Left lung (tissue), 14 donors: ENCODE measurements at regions of chr6 and their contacts with region 1.

Region 1: DNA sequence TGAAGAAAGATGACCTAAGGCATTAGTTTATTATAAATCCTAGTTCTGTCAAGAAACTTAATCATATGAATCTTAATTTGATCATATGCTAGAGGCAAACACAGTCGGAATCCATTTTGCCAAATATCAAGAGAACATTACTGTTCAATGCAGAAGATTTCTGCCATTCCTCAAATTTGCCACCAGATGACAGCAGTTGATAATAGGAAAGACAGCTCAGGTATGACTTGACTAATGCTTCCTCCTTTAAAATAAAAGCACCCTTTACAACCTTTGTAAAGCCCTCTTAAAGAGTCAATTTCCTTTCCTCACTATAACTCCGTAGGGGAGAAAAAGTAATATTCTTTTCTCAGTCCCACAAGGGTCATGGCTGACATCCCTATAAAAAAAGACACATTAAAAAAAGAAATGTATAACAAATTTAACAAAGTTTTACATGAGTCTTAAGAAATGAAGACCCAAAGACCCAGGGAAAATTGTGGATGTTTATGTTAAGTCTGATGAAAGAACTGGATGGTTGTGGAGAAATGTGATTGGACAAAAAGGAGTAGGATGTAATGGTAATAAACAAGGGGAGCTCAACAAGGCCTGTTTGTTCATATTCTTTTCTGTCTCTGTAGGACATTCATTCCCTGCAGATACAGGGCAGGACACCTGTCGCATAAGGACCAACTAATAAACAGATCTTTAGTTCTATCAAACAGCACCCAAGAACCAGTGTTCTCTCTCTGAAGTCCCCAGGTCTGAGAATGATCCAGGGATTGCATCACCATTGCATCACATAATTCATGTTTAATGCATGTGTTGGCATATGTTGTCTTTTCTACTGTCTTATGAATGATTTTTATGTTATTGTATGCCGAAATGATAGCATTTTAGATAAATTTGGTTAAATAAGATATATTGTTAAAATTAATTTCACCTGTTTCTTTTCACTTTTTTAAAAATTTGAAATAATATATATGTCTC is 23.0 kb upstream of the IL17A start:
- DNase-seq: no peak
- ATAC-seq: peak; percentile 74
- H3K4me3 ChIP-seq: no peak overlapping the region
- H3K27ac ChIP-seq: no peak overlapping the region
- H3K4me1 ChIP-seq: no peaks in the 10 kb centered on the region
- H3K27me3 ChIP-seq: peaks cover 0 to 12% of the 10 kb centered on the region in 2 donors
- CTCF ChIP-seq: peak; percentile 21 to 28

Region 2: DNA sequence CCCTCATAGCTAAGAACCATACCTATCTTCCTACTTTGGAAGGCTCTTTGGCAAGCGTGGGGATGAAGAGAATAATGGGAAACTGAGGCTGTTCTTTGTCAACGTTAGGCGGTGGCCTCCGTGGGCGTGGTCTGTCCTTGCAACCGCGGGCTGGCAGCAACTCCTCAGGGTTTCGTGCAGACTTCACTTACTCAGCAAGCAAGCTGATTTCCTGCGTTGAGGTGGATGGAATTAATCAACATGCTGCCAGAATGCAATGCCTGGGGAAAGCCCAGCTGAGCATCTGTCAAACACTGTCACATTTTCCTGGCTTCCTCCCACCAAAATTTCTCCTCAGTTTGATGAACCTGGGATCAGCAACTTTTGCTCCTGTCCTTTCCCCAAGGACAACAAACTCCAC is 90.3 kb after region 1 on chr6:
- intact Hi-C with region 1: no loop called
- DNase-seq: peak in 1 of 4 donors; percentile 70
- ATAC-seq: peak; percentile 37
- H3K4me3 ChIP-seq: no peak overlapping the region
- H3K27ac ChIP-seq: no peak overlapping the region
- H3K4me1 ChIP-seq: no peaks in the 10 kb centered on the region
- H3K27me3 ChIP-seq: peaks cover 4 to 39% of the 10 kb centered on the region in 2 donors
- CTCF ChIP-seq: no peak

Region 3: GRCh38 chr6:52263709-52264540 is 100.7 kb after region 1 on chr6:
- intact Hi-C with region 1: loop called in 1 of 2 experiments (anchors 10 kb)
- DNase-seq: peak; percentile 42 to 77 (median 62)
- ATAC-seq: peak; percentile 94
- H3K4me3 ChIP-seq: no peak overlapping the region
- H3K27ac ChIP-seq: no peak overlapping the region
- H3K4me1 ChIP-seq: no peaks in the 10 kb centered on the region
- H3K27me3 ChIP-seq: no peaks in the 10 kb centered on the region
- CTCF ChIP-seq: peak; percentile 89 to 93

Region 4: GRCh38 chr6:52482903-52483670 is 319.9 kb after region 1 on chr6:
- intact Hi-C with region 1: no loop called
- DNase-seq: no peak
- ATAC-seq: no peak
- H3K4me3 ChIP-seq: no peak overlapping the region
- H3K27ac ChIP-seq: no peak overlapping the region
- H3K4me1 ChIP-seq: no peaks in the 10 kb centered on the region
- H3K27me3 ChIP-seq: no peaks in the 10 kb centered on the region
- CTCF ChIP-seq: no peak